ENCODE measurements at regions of chr1 and their contacts with region 1.

Region 1: GRCh38 chr1:174074757-174075156 is 52.6 kb upstream of the RC3H1 start:
- DNase-seq: peak in 1 of 2 experiments; percentile 38
- H3K4me3 ChIP-seq: no peak overlapping the region
- H3K27ac ChIP-seq: no peak overlapping the region
- H3K4me1 ChIP-seq: no peaks in the 10 kb centered on the region
- H3K27me3 ChIP-seq: no peaks in the 10 kb centered on the region
- CTCF ChIP-seq: peak; percentile 73

Region 2: DNA sequence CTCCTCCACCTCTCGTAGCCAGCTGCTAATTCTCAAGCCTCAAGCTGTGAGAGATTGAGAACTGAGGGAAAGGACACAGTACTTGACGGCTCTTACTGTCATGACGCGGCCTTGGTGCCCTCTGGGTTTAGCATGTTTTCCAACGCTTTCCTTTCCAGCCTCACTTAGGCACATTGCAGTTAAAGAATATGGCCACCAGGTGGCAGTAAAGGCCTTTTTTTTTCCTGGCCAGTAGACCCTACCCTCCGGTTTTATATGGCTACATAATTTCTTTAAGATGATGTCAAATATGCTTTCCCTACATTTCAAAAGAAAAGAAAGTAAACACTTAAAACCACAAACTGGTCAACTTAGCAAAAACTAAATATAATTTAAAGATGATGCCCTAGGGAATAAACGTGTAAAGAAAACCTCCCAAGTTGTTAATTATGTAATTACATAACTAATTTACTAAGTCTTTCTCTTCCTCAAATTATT is 654.4 kb before region 1 on chr1:
- CTCF ChIA-PET with region 1: no interaction called
- POLR2A ChIA-PET with region 1: no interaction called
- intact Hi-C with region 1: loop called (anchors 2 kb)
- DNase-seq: peak; percentile 61 to 68
- H3K4me3 ChIP-seq: no peak overlapping the region
- H3K27ac ChIP-seq: no peak overlapping the region
- H3K4me1 ChIP-seq: peaks cover 36% of the 10 kb centered on the region
- H3K27me3 ChIP-seq: no peaks in the 10 kb centered on the region
- CTCF ChIP-seq: peak; percentile 95

Region 3: DNA sequence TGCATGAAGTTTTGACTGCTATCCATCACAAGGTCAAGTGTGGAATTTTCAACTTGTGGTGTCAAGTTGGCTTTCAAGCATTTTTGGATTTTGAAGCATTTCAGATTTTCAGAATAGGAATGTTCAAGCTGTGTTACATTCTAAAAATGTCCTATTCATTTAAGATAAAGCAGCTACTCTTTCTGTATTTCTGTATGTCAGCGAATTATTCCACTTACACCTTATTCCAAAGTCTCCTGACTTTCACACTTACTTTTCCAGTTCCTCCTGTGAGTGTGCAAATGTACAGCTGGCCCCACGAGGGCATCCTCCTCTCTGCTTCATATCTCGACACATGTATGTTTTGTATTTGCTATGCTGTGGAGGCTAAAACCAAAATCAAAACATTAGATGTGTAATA is 104.5 kb before region 1 on chr1:
- CTCF ChIA-PET with region 1: interaction called, 3 read pairs
- POLR2A ChIA-PET with region 1: no interaction called
- intact Hi-C with region 1: loop called (anchors 5 kb)
- DNase-seq: no peak
- H3K4me3 ChIP-seq: no peak overlapping the region
- H3K27ac ChIP-seq: no peak overlapping the region
- H3K4me1 ChIP-seq: no peaks in the 10 kb centered on the region
- H3K27me3 ChIP-seq: no peaks in the 10 kb centered on the region
- CTCF ChIP-seq: no peak

Region 4: GRCh38 chr1:174003867-174004266 is 70.9 kb before region 1 on chr1:
- CTCF ChIA-PET with region 1: interaction called, 17 read pairs
- POLR2A ChIA-PET with region 1: no interaction called
- intact Hi-C with region 1: no loop called
- DNase-seq: no peak
- H3K4me3 ChIP-seq: no peak overlapping the region
- H3K27ac ChIP-seq: no peak overlapping the region
- H3K4me1 ChIP-seq: no peaks in the 10 kb centered on the region
- H3K27me3 ChIP-seq: no peaks in the 10 kb centered on the region
- CTCF ChIP-seq: no peak

Region 5: GRCh38 chr1:174022080-174022975 is 52.4 kb before region 1 on chr1 and contains the start of gene RC3H1:
- CTCF ChIA-PET with region 1: no interaction called
- POLR2A ChIA-PET with region 1: no interaction called
- intact Hi-C with region 1: loop called (anchors 1 kb)
- DNase-seq: peak; percentile 80 to 90
- H3K4me3 ChIP-seq: peak within 1 kb of the TSS; percentile 76
- H3K27ac ChIP-seq: peak within 1 kb of the TSS; percentile 93
- H3K4me1 ChIP-seq: peaks cover 41% of the 10 kb centered on the region
- H3K27me3 ChIP-seq: no peaks in the 10 kb centered on the region
- CTCF ChIP-seq: no peak
- total RNA-seq, gene RC3H1: 25.2 and 29.5 TPM in 2 replicates

Region 6: GRCh38 chr1:174031099-174031498 is 43.7 kb before region 1 on chr1:
- CTCF ChIA-PET with region 1: no interaction called
- POLR2A ChIA-PET with region 1: interaction called, 14 read pairs
- intact Hi-C with region 1: no loop called
- DNase-seq: no peak
- H3K4me3 ChIP-seq: no peak overlapping the region
- H3K27ac ChIP-seq: no peak overlapping the region
- H3K4me1 ChIP-seq: peaks cover 10% of the 10 kb centered on the region; the same call in 1 of the 2 replicates
- H3K27me3 ChIP-seq: no peaks in the 10 kb centered on the region
- CTCF ChIP-seq: no peak

Region 7: DNA sequence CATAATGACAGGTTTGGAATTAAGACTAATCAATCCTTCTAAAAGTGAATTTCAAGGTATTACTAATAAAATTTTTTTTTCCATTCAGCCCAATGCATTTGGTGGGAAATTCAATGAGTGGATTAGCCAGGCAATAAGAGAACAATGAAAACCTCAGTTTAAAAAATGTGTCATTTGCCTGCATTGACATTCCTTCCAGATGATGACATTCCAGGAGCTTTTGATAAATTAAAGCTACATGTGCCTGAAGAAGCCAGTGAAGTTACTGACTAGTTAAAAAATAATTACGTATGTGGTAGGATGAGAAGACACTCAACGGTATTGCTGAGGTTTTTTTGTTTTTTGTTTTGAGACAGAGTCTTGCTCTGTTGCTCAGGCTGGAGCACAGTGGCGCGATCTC is 14.7 kb before region 1 on chr1:
- CTCF ChIA-PET with region 1: no interaction called
- POLR2A ChIA-PET with region 1: no interaction called
- intact Hi-C with region 1: no loop called
- DNase-seq: peak in 1 of 2 experiments; percentile 49
- H3K4me3 ChIP-seq: no peak overlapping the region
- H3K27ac ChIP-seq: no peak overlapping the region
- H3K4me1 ChIP-seq: no peaks in the 10 kb centered on the region
- H3K27me3 ChIP-seq: no peaks in the 10 kb centered on the region
- CTCF ChIP-seq: no peak

Region 8: GRCh38 chr1:174204697-174205308 is 130.0 kb after region 1 on chr1:
- CTCF ChIA-PET with region 1: interaction called, 10 read pairs
- POLR2A ChIA-PET with region 1: no interaction called
- intact Hi-C with region 1: no loop called
- DNase-seq: peak in 1 of 2 experiments; percentile 37
- H3K4me3 ChIP-seq: no peak overlapping the region
- H3K27ac ChIP-seq: no peak overlapping the region
- H3K4me1 ChIP-seq: no peaks in the 10 kb centered on the region
- H3K27me3 ChIP-seq: no peaks in the 10 kb centered on the region
- CTCF ChIP-seq: no peak

Region 9: GRCh38 chr1:174217787-174218574 is 143.2 kb after region 1 on chr1:
- CTCF ChIA-PET with region 1: no interaction called
- POLR2A ChIA-PET with region 1: no interaction called
- intact Hi-C with region 1: no loop called
- DNase-seq: no peak
- H3K4me3 ChIP-seq: no peak overlapping the region
- H3K27ac ChIP-seq: no peak overlapping the region
- H3K4me1 ChIP-seq: 0 out of 2 replicates have a peak, but pooled peaks cover 5% of the 10 kb centered on the region
- H3K27me3 ChIP-seq: no peaks in the 10 kb centered on the region
- CTCF ChIP-seq: peak; percentile 87

Measured in PC-9 (cell line).